OCI-LY7 (cell line): ENCODE measurements at regions of chr12 and their contacts with region 1.

Region 1: DNA sequence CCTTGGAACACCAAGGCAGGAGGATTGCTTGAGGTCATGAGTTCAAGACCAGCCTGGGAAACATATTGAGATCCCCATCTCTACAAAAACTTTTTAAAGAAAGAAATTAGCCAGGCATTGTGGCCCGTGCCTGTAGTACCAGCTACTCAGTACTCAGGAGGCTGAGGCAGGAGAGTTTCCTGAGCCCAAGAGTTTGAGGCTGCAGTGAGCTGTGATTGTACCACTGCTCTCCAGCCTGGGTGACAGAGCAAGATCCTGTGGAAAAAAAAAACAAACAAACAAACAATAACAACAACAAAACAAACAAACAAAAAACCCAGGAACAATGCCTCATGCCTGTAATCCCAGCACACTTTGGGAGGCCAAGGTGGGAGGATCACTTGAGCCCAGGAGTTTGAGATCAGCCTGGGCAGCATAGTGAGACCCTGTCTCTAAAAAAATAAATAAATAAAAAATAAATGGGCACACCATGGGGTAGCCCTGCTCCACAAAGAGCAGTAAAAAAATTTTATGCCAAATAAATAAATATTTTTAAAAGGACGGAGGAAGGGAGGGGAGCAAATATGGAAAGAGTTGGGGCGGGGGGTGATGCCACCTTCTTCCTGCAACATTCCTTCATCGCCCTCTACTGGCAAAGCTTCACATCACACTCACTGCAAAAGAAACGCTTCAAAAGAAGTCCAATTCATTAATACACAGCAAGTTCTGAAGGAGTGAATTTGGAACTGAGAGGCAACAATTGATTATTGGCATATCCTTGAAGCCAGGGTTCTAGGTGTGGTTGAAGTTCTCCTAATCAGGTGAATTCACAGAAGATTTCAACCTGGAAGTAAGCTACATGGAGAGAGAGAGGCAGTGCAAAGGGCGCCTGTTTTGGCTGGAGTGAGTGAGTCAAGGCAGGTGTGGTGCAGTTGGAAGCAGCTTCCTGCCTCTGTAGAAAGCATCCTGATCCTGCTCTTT is 8.8 kb upstream of the GNPTAB start:
- DNase-seq: peak; percentile 75
- H3K4me3 ChIP-seq: no peak overlapping the region
- H3K27ac ChIP-seq: peak overlapping the region; percentile 43
- H3K4me1 ChIP-seq: peaks cover 28% of the 10 kb centered on the region
- CTCF ChIP-seq: peak; percentile 93

Region 2: DNA sequence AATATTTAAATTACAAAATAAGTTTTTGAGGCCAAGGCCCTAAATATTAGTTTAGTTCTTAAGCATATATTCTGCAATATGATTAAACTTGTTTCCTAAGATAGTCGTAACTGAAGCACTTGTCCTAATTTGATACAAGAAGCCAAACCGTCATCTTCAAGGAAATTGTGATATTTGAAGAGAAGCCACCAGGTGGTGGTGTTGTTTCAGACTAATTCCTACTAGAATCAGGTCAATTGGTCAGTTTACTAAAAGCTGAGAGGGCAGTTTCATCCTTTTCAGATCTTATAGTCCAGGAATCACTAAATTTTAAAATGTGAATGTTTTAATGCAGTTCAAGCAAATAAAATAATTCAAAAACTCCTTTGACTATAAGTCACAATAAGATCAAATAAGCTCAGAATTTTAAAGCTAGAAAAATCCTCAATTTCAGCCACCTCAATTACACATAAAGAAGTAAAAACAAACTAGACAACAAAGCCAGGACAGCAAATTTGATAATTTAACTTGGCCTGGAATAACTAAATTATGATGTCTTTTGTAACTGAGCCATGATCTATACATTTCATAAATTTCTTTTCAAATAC is 425.0 kb before region 1 on chr12:
- CTCF ChIA-PET with region 1: no interaction called
- POLR2A ChIA-PET with region 1: interaction called, 7 read pairs
- intact Hi-C with region 1: loop called (anchors 2 kb)
- DNase-seq: peak; percentile 73
- H3K4me3 ChIP-seq: no peak overlapping the region
- H3K27ac ChIP-seq: no peak overlapping the region
- H3K4me1 ChIP-seq: peaks cover 4% of the 10 kb centered on the region
- CTCF ChIP-seq: peak; percentile 93

Region 3: GRCh38 chr12:101490286-101490920 is 349.2 kb before region 1 on chr12:
- CTCF ChIA-PET with region 1: no interaction called
- POLR2A ChIA-PET with region 1: interaction called, 3 read pairs
- intact Hi-C with region 1: loop called (anchors 2 kb)
- DNase-seq: peak; percentile 61
- H3K4me3 ChIP-seq: no peak overlapping the region
- H3K27ac ChIP-seq: no peak overlapping the region
- H3K4me1 ChIP-seq: peaks cover 8% of the 10 kb centered on the region
- CTCF ChIP-seq: peak; percentile 83

Region 4: GRCh38 chr12:101570047-101570446 is 269.6 kb before region 1 on chr12:
- CTCF ChIA-PET with region 1: no interaction called
- POLR2A ChIA-PET with region 1: no interaction called
- intact Hi-C with region 1: loop called (anchors 5 kb)
- DNase-seq: peak; percentile 31
- H3K4me3 ChIP-seq: no peak overlapping the region
- H3K27ac ChIP-seq: no peak overlapping the region
- H3K4me1 ChIP-seq: peaks cover 9% of the 10 kb centered on the region
- CTCF ChIP-seq: peak; percentile 75

Region 5: GRCh38 chr12:101819467-101819866 is 20.1 kb before region 1 on chr12:
- CTCF ChIA-PET with region 1: no interaction called
- POLR2A ChIA-PET with region 1: no interaction called
- intact Hi-C with region 1: no loop called
- DNase-seq: no peak
- H3K4me3 ChIP-seq: no peak overlapping the region
- H3K27ac ChIP-seq: no peak overlapping the region
- H3K4me1 ChIP-seq: peaks cover 23% of the 10 kb centered on the region
- CTCF ChIP-seq: no peak

Region 6: GRCh38 chr12:101854747-101855146 is 15.1 kb after region 1 on chr12:
- CTCF ChIA-PET with region 1: interaction called, 3 read pairs
- POLR2A ChIA-PET with region 1: interaction called, 21 read pairs
- intact Hi-C with region 1: no loop called
- DNase-seq: peak; percentile 76
- H3K4me3 ChIP-seq: peak overlapping the region; percentile 0
- H3K27ac ChIP-seq: peak overlapping the region; percentile 53
- H3K4me1 ChIP-seq: peaks cover 53% of the 10 kb centered on the region
- CTCF ChIP-seq: no peak